CD14-positive monocyte (primary cell): ENCODE measurements at regions of chr22 and their contacts with region 1.

Region 1: GRCh38 chr22:25802018-25802417 is 60.0 kb downstream of the MYO18B start:
- DNase-seq: no peak
- H3K4me3 ChIP-seq: no peak overlapping the region
- H3K4me3 Mint-ChIP-seq: no peak overlapping the region
- H3K27ac ChIP-seq: no peak overlapping the region
- H3K27ac Mint-ChIP-seq: no peak overlapping the region
- H3K4me1 ChIP-seq: no peaks in the 10 kb centered on the region
- H3K4me1 Mint-ChIP-seq: no peaks in the 10 kb centered on the region
- H3K27me3 ChIP-seq: no peaks in the 10 kb centered on the region
- H3K27me3 Mint-ChIP-seq: peaks cover 3 to 8% (median 7%) of the 10 kb centered on the region in 3 donors
- CTCF ChIP-seq: no peak

Region 2: GRCh38 chr22:25680956-25681355 is 121.1 kb before region 1 on chr22:
- intact Hi-C with region 1: no loop called
- DNase-seq: no peak
- H3K4me3 ChIP-seq: no peak overlapping the region
- H3K4me3 Mint-ChIP-seq: no peak overlapping the region
- H3K27ac ChIP-seq: no peak overlapping the region
- H3K27ac Mint-ChIP-seq: no peak overlapping the region
- H3K4me1 ChIP-seq: no peaks in the 10 kb centered on the region
- H3K4me1 Mint-ChIP-seq: peaks cover 3% of the 10 kb centered on the region
- H3K27me3 ChIP-seq: no peaks in the 10 kb centered on the region
- H3K27me3 Mint-ChIP-seq: peaks cover 0 to 2% (median 0%) of the 10 kb centered on the region in 3 donors
- CTCF ChIP-seq: no peak

Region 3: GRCh38 chr22:25747245-25747944 is 54.6 kb before region 1 on chr22:
- intact Hi-C with region 1: loop called in 1 of 2 experiments (anchors 10 kb)
- DNase-seq: peak; percentile 5 to 56 (median 10)
- H3K4me3 ChIP-seq: no peak overlapping the region
- H3K4me3 Mint-ChIP-seq: no peak overlapping the region
- H3K27ac ChIP-seq: no peak overlapping the region
- H3K27ac Mint-ChIP-seq: no peak overlapping the region
- H3K4me1 ChIP-seq: peaks cover 0 to 3% of the 10 kb centered on the region in 2 donors
- H3K4me1 Mint-ChIP-seq: peaks cover 10% of the 10 kb centered on the region
- H3K27me3 ChIP-seq: no peaks in the 10 kb centered on the region
- H3K27me3 Mint-ChIP-seq: peaks cover 5 to 13% (median 9%) of the 10 kb centered on the region in 3 donors
- CTCF ChIP-seq: no peak

Region 4: GRCh38 chr22:25774575-25775026 is 27.4 kb before region 1 on chr22:
- intact Hi-C with region 1: no loop called
- DNase-seq: no peak
- H3K4me3 ChIP-seq: no peak overlapping the region
- H3K4me3 Mint-ChIP-seq: no peak overlapping the region
- H3K27ac ChIP-seq: no peak overlapping the region
- H3K27ac Mint-ChIP-seq: no peak overlapping the region
- H3K4me1 ChIP-seq: no peaks in the 10 kb centered on the region
- H3K4me1 Mint-ChIP-seq: peaks cover 2% of the 10 kb centered on the region
- H3K27me3 ChIP-seq: peaks cover 0 to 4% of the 10 kb centered on the region in 2 donors
- H3K27me3 Mint-ChIP-seq: peaks cover 3 to 10% (median 10%) of the 10 kb centered on the region in 3 donors
- CTCF ChIP-seq: peak; percentile 24